ENCODE measurements at regions of chr18 and their contacts with region 1.

Region 1: DNA sequence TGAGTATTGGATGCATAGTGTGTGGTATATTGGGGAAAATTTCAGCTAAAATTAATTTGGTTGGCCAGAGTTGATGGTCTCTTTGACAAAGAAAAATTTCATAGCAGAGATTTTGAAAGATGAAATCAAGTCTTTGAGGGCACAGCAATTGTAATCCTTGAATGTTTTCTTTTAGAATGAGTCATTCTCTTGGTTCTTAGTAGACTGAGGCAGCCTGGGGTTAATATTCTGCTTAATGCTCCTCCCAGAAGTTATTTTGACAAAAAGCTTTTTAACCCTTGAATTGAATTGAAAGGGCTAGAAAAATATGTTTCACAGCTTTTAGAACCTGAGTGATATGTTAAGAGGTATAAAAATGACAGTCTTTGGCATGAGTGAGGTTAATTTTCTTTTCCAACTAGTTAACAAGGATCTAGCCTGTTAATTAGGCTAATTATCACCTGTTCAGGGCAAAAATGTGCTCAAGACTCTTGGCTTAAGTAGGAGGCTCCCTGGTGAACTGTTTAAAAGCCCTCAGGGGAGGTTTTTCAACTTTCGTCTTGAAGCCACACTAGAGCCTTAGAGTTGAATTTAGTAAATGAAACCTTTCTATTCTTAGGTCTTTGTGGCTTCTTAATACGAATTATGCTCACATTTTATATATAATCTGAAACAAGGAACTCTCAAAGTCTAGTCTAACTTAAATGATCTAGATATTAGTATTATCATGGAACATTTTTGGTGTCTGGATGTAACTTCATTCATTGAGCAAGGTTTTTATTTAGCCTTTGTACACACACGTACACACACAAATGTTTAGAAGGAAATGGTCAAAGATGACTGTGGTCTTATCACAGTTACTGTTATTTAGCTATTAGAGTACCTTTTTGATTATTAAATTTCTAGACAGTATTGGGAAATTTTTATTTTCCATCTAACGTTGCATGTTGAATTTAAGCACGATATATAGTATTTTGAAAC is 272.5 kb downstream of the ZNF407 start:
- DNase-seq: no peak
- ATAC-seq: no peak
- H3K4me3 ChIP-seq: no peak overlapping the region
- H3K27ac ChIP-seq: no peak overlapping the region
- H3K4me1 ChIP-seq: no peaks in the 10 kb centered on the region
- H3K27me3 ChIP-seq: no peaks in the 10 kb centered on the region
- CTCF ChIP-seq: no peak

Region 2: GRCh38 chr18:74796841-74797576 is 73.2 kb before region 1 on chr18:
- CTCF ChIA-PET with region 1: no interaction called
- POLR2A ChIA-PET with region 1: no interaction called
- in situ Hi-C with region 1: no loop called
- intact Hi-C with region 1: no loop called
- DNase-seq: peak; percentile 36
- ATAC-seq: peak; percentile 80
- H3K4me3 ChIP-seq: no peak overlapping the region
- H3K27ac ChIP-seq: no peak overlapping the region
- H3K4me1 ChIP-seq: peaks cover 11% of the 10 kb centered on the region
- H3K27me3 ChIP-seq: no peaks in the 10 kb centered on the region
- CTCF ChIP-seq: no peak

Region 3: DNA sequence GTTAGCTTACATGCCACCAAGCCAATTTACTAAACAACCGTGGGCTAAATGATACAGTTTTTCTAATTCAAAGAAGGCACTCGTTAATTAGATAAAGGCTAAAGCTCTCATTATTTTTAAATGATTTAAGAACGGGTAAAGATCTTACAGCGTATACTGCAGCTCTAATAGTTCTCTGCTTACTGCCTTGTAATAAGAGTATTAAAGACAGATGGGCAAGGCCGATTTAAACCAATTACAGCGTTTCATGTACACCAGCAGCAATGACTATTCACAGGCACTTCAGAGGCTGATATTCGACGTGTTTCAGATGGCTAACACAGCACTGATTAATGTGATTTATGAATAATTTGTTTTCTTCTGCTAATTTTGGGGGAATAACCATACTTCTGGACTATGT is 13.3 kb before region 1 on chr18:
- CTCF ChIA-PET with region 1: no interaction called
- POLR2A ChIA-PET with region 1: interaction called, 11 read pairs
- in situ Hi-C with region 1: no loop called
- intact Hi-C with region 1: no loop called
- DNase-seq: no peak
- ATAC-seq: no peak
- H3K4me3 ChIP-seq: no peak overlapping the region
- H3K27ac ChIP-seq: no peak overlapping the region
- H3K4me1 ChIP-seq: no peaks in the 10 kb centered on the region
- H3K27me3 ChIP-seq: no peaks in the 10 kb centered on the region
- CTCF ChIP-seq: no peak